CD8-positive, alpha-beta T cell (primary cell): ENCODE measurements at regions of chr11 and their contacts with region 1.

Region 1: DNA sequence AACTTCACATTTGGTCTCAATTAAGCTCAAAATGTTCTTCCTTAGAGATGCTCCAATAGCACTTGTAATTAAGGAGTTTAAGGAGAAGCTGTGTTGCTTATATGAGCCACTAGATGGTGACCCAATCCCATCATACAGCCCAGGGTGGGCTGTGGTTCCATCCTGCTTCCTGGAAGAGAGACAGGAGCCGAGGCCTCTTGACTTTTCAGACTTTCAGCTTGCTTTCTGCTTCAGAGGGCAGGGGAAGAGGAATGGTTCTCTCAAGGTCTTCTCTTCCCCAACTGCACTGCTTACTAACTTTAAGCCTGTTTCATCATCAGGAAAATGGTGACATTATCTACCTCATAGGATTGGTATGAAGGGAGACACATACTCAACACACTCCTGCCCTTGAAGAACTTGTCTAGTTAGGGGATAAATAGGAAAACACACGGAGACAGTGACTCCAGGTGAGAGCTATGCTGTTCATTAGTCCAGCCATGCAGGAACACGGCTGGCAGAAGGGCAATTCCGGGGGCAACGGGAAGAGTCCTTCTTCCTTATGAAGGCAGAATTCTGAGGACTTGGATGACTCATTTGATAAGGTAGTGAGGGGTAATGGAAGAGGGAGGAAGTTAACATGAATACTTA is 20.1 kb downstream of the TMEM218 start:
- DNase-seq: peak in 3 of 9 experiments; percentile 30 to 48 (median 47)
- ATAC-seq: no peak
- H3K4me3 ChIP-seq: no peak overlapping the region
- H3K4me3 Mint-ChIP-seq: no peak overlapping the region
- H3K27ac ChIP-seq: no peak overlapping the region
- H3K27ac Mint-ChIP-seq: no peak overlapping the region
- H3K4me1 ChIP-seq: no peaks in the 10 kb centered on the region
- H3K4me1 Mint-ChIP-seq: no peaks in the 10 kb centered on the region
- H3K27me3 ChIP-seq: no peaks in the 10 kb centered on the region
- H3K27me3 Mint-ChIP-seq: no peaks in the 10 kb centered on the region
- CTCF ChIP-seq: no peak

Region 2: DNA sequence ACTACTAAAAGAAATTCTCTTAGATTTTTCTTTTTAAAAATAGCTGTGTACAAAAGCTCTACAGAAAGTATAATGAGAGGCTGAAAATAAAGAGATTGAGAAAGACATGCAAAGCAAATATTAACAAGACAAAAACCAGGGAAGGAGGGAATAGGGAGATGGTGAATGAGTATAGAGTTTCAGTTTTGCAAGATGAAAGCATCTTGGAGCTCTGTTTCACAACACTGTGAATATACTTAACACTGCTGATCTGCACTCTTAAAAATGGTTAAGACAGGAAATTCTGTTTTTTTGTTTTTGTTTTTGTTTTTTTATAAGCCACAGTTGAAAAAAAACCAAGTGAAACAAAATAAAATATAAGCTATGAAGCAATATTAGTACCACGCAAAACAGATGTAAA is 14.6 kb after region 1 on chr11:
- CTCF ChIA-PET with region 1: interaction called, 16 read pairs
- POLR2A ChIA-PET with region 1: no interaction called
- intact Hi-C with region 1: no loop called
- DNase-seq: no peak
- ATAC-seq: no peak
- H3K4me3 ChIP-seq: no peak overlapping the region
- H3K4me3 Mint-ChIP-seq: no peak overlapping the region
- H3K27ac ChIP-seq: no peak overlapping the region
- H3K27ac Mint-ChIP-seq: no peak overlapping the region
- H3K4me1 ChIP-seq: peaks cover 8% of the 10 kb centered on the region
- H3K4me1 Mint-ChIP-seq: peaks cover 18% of the 10 kb centered on the region
- H3K27me3 ChIP-seq: no peaks in the 10 kb centered on the region
- H3K27me3 Mint-ChIP-seq: no peaks in the 10 kb centered on the region
- CTCF ChIP-seq: no peak

Region 3: GRCh38 chr11:125123947-125124617 is 32.7 kb after region 1 on chr11:
- CTCF ChIA-PET with region 1: interaction called, 18 read pairs
- POLR2A ChIA-PET with region 1: interaction called, 3 read pairs
- intact Hi-C with region 1: loop called in 1 of 2 experiments (anchors 1 kb)
- DNase-seq: peak in 5 of 9 experiments; percentile 28 to 64 (median 33)
- ATAC-seq: peak; percentile 48
- H3K4me3 ChIP-seq: no peak overlapping the region
- H3K4me3 Mint-ChIP-seq: no peak overlapping the region
- H3K27ac ChIP-seq: no peak overlapping the region
- H3K27ac Mint-ChIP-seq: no peak overlapping the region
- H3K4me1 ChIP-seq: no peaks in the 10 kb centered on the region
- H3K4me1 Mint-ChIP-seq: peaks cover 7% of the 10 kb centered on the region
- H3K27me3 ChIP-seq: peaks cover 0 to 12% of the 10 kb centered on the region in 2 experiments
- H3K27me3 Mint-ChIP-seq: peaks cover 24% of the 10 kb centered on the region
- CTCF ChIP-seq: peak; percentile 18

Region 4: DNA sequence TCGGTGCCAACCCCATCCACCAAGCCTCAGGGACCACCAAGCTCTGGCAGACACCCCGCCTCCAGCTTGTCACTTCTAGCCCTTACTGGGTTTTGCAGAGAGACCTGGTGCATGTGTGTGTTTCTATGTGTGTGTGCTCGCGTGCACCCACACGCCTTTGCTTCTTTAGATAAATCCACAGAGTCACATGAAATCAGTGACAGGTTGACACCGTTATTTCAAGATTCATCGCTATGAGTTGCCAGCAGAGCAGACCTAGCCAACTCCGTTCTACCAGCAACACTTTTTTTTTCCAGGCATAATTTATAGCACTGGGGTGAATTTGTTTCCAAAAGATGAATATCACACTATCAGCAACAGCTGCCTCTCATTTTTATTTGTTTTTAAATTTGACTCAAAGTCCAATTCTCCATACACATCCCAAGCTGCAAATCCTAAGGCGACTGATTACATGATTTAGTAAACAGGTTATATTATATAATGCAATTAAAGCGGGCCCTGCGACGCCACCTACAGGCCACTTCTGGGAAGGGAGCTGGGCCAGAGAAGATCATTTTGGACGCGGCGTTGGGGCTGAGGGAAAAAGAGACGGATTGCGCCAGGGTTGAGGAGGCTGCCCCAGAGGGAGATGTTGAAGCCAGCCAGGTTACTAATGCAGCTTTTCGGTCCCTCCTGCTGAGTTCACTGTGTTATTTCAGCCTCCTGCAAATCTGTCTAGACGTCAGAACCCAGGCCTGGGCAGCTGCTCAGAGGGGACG is 254.2 kb after region 1 on chr11:
- CTCF ChIA-PET with region 1: interaction called, 3 read pairs
- POLR2A ChIA-PET with region 1: no interaction called
- intact Hi-C with region 1: loop called in 1 of 2 experiments (anchors 5 kb)
- DNase-seq: peak in 5 of 9 experiments; percentile 14 to 45 (median 42)
- ATAC-seq: no peak
- H3K4me3 ChIP-seq: no peak overlapping the region
- H3K4me3 Mint-ChIP-seq: no peak overlapping the region
- H3K27ac ChIP-seq: no peak overlapping the region
- H3K27ac Mint-ChIP-seq: no peak overlapping the region
- H3K4me1 ChIP-seq: no peaks in the 10 kb centered on the region
- H3K4me1 Mint-ChIP-seq: peaks cover 2% of the 10 kb centered on the region
- H3K27me3 ChIP-seq: no peaks in the 10 kb centered on the region
- H3K27me3 Mint-ChIP-seq: peaks cover 15% of the 10 kb centered on the region
- CTCF ChIP-seq: peak; percentile 64

Region 5: GRCh38 chr11:125404776-125405435 is 313.5 kb after region 1 on chr11:
- CTCF ChIA-PET with region 1: no interaction called
- POLR2A ChIA-PET with region 1: no interaction called
- intact Hi-C with region 1: loop called in 1 of 2 experiments (anchors 5 kb)
- DNase-seq: peak; percentile 38 to 79 (median 67)
- ATAC-seq: peak; percentile 94
- H3K4me3 ChIP-seq: no peak overlapping the region
- H3K4me3 Mint-ChIP-seq: no peak overlapping the region
- H3K27ac ChIP-seq: no peak overlapping the region
- H3K27ac Mint-ChIP-seq: no peak overlapping the region
- H3K4me1 ChIP-seq: no peaks in the 10 kb centered on the region
- H3K4me1 Mint-ChIP-seq: peaks cover 6% of the 10 kb centered on the region
- H3K27me3 ChIP-seq: peaks cover 0 to 7% of the 10 kb centered on the region in 2 experiments
- H3K27me3 Mint-ChIP-seq: peaks cover 60% of the 10 kb centered on the region
- CTCF ChIP-seq: peak; percentile 88

Region 6: GRCh38 chr11:125887373-125888324 is 796.3 kb after region 1 on chr11 and contains the start of gene HYLS1:
- CTCF ChIA-PET with region 1: no interaction called
- POLR2A ChIA-PET with region 1: no interaction called
- intact Hi-C with region 1: no loop called
- DNase-seq: peak; percentile 87 to 97 (median 94)
- ATAC-seq: peak; percentile 88
- H3K4me3 ChIP-seq: peak within 1 kb of the TSS; percentile 81 to 84
- H3K4me3 Mint-ChIP-seq: peak within 1 kb of the TSS; percentile 88
- H3K27ac ChIP-seq: peak within 1 kb of the TSS; percentile 61 to 87
- H3K27ac Mint-ChIP-seq: peak within 1 kb of the TSS; percentile 87
- H3K4me1 ChIP-seq: peaks cover 10% of the 10 kb centered on the region
- H3K4me1 Mint-ChIP-seq: peaks cover 31% of the 10 kb centered on the region
- H3K27me3 ChIP-seq: no peaks in the 10 kb centered on the region
- H3K27me3 Mint-ChIP-seq: no peaks in the 10 kb centered on the region
- CTCF ChIP-seq: no peak
- total RNA-seq, gene HYLS1: 1.1 to 1.2 TPM